Psoas muscle (tissue), 8 donors: ENCODE measurements at regions of chr18 and their contacts with region 1.

Region 1: DNA sequence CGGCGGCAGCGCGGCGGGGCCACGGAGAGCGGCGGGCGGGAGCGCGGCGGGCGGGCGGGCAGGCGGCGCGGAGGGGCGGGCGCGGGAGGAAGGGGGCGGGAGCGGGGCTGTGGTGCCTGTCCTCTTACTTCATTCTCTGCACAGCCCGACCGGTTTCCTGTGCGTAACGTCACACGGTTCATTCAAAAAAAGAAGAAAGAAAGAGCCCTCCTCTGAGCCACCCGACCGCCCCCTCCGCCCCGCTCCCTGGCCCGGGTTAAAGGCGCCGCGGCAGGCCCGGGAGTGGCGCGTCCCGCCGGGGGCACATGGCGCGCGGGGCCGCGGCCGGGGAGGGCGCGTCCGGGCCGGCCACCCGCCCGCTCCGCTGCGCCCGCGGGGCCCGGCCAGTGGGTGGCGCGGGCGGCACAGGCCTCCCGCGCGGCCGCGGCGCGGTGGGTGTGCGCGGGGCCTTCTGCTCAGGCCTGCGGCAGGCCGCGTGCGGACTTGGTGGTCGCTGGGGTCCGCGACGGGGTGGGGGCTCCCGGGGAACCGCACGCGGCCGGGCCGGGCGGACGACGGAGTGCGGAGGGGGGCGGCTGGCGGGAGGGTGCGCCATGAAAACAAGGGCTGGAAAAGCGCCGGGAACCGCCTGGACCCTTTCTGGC is 599 bp upstream of the BCL2 start:
- DNase-seq: peak; percentile 82 to 90
- ATAC-seq: peak; percentile 72 to 82 (median 74)
- H3K4me3 ChIP-seq: peak overlapping the region; percentile 71
- H3K27ac ChIP-seq: peak overlapping the region; percentile 87
- H3K4me1 ChIP-seq: peaks cover 29% of the 10 kb centered on the region
- H3K27me3 ChIP-seq: no peaks in the 10 kb centered on the region
- CTCF ChIP-seq: peak; percentile 29

Region 2: GRCh38 chr18:63016270-63016669 is 303.9 kb before region 1 on chr18:
- intact Hi-C with region 1: loop called (anchors 2 kb)
- DNase-seq: no peak
- ATAC-seq: peak; percentile 51 to 83 (median 70)
- H3K4me3 ChIP-seq: no peak overlapping the region
- H3K27ac ChIP-seq: no peak overlapping the region
- H3K4me1 ChIP-seq: no peaks in the 10 kb centered on the region
- H3K27me3 ChIP-seq: no peaks in the 10 kb centered on the region
- CTCF ChIP-seq: peak; percentile 88

Region 3: GRCh38 chr18:63119647-63120046 is 200.5 kb before region 1 on chr18:
- intact Hi-C with region 1: loop called (anchors 2 to 5 kb)
- DNase-seq: peak in 1 of 2 donors; percentile 64
- ATAC-seq: peak; percentile 68 to 89 (median 73)
- H3K4me3 ChIP-seq: no peak overlapping the region
- H3K27ac ChIP-seq: peak overlapping the region; percentile 74
- H3K4me1 ChIP-seq: peaks cover 32% of the 10 kb centered on the region
- H3K27me3 ChIP-seq: no peaks in the 10 kb centered on the region
- CTCF ChIP-seq: peak; percentile 65

Region 4: GRCh38 chr18:63131106-63131958 is 188.8 kb before region 1 on chr18:
- intact Hi-C with region 1: loop called (anchors 5 kb)
- DNase-seq: no peak
- ATAC-seq: peak; percentile 60 to 75 (median 61)
- H3K4me3 ChIP-seq: peak overlapping the region; percentile 13
- H3K27ac ChIP-seq: peak overlapping the region; percentile 72
- H3K4me1 ChIP-seq: peaks cover 21% of the 10 kb centered on the region
- H3K27me3 ChIP-seq: no peaks in the 10 kb centered on the region
- CTCF ChIP-seq: peak; percentile 73

Region 5: GRCh38 chr18:63138436-63139340 is 181.5 kb before region 1 on chr18:
- intact Hi-C with region 1: loop called (anchors 5 kb)
- DNase-seq: peak in 1 of 2 donors; percentile 60
- ATAC-seq: peak; percentile 43 to 67 (median 54)
- H3K4me3 ChIP-seq: peak overlapping the region; percentile 61
- H3K27ac ChIP-seq: peak overlapping the region; percentile 82
- H3K4me1 ChIP-seq: peaks cover 57% of the 10 kb centered on the region
- H3K27me3 ChIP-seq: no peaks in the 10 kb centered on the region
- CTCF ChIP-seq: no peak

Region 6: DNA sequence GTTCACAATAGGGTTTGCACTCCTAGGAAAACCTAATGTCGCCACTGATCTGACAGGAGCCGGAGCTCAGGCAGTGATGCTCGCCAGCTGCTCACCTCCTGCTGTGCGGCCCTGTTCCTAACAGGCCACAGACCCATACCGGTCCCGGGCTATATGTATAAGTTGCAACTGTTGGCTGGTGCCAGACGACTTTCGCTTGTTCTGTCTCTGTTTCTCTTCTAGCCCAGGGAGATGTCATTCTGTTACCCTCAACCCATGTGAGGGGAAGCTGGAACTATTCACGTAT is 170.9 kb before region 1 on chr18:
- intact Hi-C with region 1: no loop called
- DNase-seq: no peak
- ATAC-seq: peak in 3 of 4 donors; percentile 24 to 56 (median 32)
- H3K4me3 ChIP-seq: no peak overlapping the region
- H3K27ac ChIP-seq: peak overlapping the region; percentile 64
- H3K4me1 ChIP-seq: peaks cover 47% of the 10 kb centered on the region
- H3K27me3 ChIP-seq: no peaks in the 10 kb centered on the region
- CTCF ChIP-seq: no peak

Region 7: GRCh38 chr18:63267975-63268721 is 52.0 kb before region 1 on chr18:
- intact Hi-C with region 1: loop called (anchors 5 kb)
- DNase-seq: no peak
- ATAC-seq: no peak
- H3K4me3 ChIP-seq: no peak overlapping the region
- H3K27ac ChIP-seq: no peak overlapping the region
- H3K4me1 ChIP-seq: peaks cover 37% of the 10 kb centered on the region
- H3K27me3 ChIP-seq: no peaks in the 10 kb centered on the region
- CTCF ChIP-seq: no peak